Left ventricle myocardium inferior (tissue), 1 donor: ENCODE measurements at regions of chr12 and their contacts with region 1.

Region 1: DNA sequence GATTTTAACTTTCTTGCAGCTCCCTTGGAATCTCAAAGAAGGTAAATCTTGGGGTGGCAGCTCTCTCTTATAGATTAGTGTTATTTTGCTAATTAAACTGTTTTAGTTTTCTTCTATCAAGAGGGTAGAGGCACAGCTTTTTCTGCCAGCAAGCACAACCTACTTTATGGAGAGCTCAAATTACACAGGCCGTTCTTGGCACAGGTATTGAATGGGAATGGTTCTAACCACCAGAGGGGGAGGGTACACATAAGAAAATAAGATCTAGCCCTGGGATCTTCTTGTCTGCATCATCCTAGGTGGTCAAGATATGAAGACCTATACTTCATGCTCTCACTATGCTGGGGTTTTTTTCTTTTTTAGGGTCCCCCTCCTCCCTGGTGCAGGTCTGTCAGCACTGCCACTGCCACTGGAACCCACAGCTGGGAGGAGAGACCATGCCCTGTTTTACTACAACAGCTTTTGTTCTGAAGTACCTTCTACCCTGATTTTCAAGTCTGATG is 48.6 kb upstream of the STAC3 start:
- DNase-seq: no peak
- H3K4me3 ChIP-seq: no peak overlapping the region
- H3K27ac ChIP-seq: no peak overlapping the region
- H3K4me1 ChIP-seq: peaks cover 16% of the 10 kb centered on the region
- H3K27me3 ChIP-seq: no peaks in the 10 kb centered on the region
- CTCF ChIP-seq: no peak

Region 2: DNA sequence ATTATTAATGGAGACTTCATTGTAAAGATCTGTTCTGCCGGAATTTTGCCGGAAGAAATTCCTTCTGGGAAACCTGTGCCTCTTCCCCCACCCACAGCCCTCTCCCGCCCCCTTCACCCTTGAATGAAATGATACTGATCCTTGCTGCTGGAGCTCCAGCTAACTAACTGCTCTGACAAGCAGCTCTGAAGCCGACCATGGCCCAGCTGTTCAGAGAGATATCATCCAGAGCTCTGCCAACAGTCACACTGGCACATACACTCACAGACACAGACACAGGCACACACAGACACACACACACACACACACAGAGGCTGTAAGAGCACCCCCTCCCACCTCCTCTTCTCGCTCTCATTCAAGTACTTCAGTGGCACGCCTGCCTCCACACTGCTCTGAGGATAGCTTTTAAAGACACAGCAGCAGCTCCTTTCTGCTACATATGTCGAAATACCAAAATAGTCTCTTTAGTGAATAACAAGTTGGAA is 42.7 kb after region 1 on chr12:
- intact Hi-C with region 1: no loop called
- DNase-seq: peak; percentile 14
- H3K4me3 ChIP-seq: no peak overlapping the region
- H3K27ac ChIP-seq: peak overlapping the region; percentile 31
- H3K4me1 ChIP-seq: peaks cover 38% of the 10 kb centered on the region
- H3K27me3 ChIP-seq: no peaks in the 10 kb centered on the region
- CTCF ChIP-seq: no peak

Region 3: GRCh38 chr12:57377103-57377840 is 77.7 kb after region 1 on chr12:
- intact Hi-C with region 1: no loop called
- DNase-seq: no peak
- H3K4me3 ChIP-seq: no peak overlapping the region
- H3K27ac ChIP-seq: no peak overlapping the region
- H3K4me1 ChIP-seq: peaks cover 8% of the 10 kb centered on the region
- H3K27me3 ChIP-seq: no peaks in the 10 kb centered on the region
- CTCF ChIP-seq: no peak

Region 4: DNA sequence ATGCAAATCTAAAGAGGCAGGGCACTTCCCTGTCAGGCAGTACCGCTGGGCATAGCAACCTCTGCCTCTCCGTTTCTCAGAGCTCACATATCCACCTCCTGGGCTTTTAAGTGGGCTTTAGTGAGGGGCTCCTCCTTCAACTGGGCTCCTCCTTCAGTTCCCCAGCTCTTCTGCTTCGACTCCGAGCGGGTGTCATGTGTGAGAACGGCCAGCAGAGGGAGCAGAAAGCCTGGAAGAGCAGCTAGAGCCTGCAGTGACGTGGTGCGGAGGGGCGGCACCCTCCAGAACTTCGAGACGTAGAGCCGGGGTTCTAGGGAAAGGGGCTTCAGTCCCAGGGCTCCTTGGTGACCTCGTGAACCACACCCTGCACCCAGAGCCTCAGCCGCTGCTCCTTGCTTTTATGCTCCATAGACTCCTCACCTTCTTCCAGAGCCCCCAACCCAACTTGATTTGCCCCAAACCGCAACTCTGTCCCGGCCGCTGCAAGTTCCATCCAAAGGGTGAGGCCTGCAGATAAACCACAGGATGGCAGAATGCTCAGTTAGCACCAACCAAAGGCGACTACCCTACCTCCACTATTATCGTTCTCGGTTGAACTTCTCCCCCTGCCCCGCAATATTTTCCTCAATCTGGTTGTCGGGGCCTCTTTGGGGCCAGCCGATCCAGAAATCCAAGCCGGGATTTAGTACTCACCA is 159.6 kb after region 1 on chr12:
- intact Hi-C with region 1: loop called (anchors 5 kb)
- DNase-seq: peak; percentile 93
- H3K4me3 ChIP-seq: peak overlapping the region; percentile 80
- H3K27ac ChIP-seq: peak overlapping the region; percentile 88
- H3K4me1 ChIP-seq: peaks cover 44% of the 10 kb centered on the region
- H3K27me3 ChIP-seq: peaks cover 20% of the 10 kb centered on the region
- CTCF ChIP-seq: peak; percentile 97